ENCODE measurements at regions of chr3 and their contacts with region 1.

Region 1: GRCh38 chr3:31768479-31769123 is 212.5 kb downstream of the OSBPL10 start:
- DNase-seq: peak; percentile 84
- H3K4me3 Mint-ChIP-seq: no peak overlapping the region
- H3K27ac Mint-ChIP-seq: no peak overlapping the region
- H3K4me1 Mint-ChIP-seq: peaks cover 32% of the 10 kb centered on the region
- H3K27me3 Mint-ChIP-seq: no peaks in the 10 kb centered on the region

Region 2: DNA sequence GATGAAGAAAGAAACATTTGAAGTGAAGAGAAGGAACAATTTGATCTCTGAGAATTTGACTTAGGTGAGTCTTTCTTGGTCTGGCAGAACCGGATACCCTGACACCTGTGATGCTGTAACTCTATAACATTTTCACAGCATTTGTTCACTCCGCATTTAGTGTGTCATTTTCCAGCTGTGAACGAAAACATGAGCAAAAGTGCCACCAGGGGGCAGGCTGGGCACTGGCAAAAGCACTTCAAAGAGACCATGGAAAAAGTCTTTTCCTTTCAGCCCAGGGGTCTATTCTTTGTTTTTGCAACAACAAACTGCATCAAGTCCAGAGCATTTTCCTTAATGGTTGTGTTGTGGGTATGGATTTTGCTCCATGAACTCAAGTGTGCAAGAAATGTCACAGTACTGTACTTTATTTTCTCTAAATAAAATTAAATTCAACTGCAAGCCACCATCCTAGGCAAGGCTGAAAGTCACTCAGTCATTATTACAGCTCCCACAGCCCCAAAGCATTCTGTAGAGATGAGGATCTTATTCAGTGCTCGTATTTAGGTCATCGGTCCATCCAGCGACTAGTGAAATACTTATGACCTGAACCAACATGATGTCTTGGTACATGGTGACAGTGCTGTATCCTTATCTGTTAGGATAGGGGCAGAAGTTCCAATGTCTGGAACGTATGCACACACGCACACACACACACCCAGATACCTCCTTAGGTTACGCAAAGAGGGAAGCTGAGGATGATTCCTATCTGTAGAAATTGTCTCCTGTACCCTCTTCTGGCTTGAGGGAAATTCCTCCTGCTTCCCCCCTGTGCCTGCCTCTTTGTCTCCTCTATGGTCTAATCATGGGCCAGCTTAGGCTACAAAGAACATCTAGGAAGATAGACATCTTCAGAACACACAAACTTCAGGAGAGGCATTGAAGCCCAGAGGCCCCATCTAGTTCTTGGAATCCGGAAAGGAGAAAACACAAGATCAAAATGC is 999.6 kb before region 1 on chr3:
- CTCF ChIA-PET with region 1: no interaction called
- intact Hi-C with region 1: loop called (anchors 2 kb)
- DNase-seq: peak; percentile 87
- H3K4me3 Mint-ChIP-seq: no peak overlapping the region
- H3K27ac Mint-ChIP-seq: no peak overlapping the region
- H3K4me1 Mint-ChIP-seq: no peaks in the 10 kb centered on the region
- H3K27me3 Mint-ChIP-seq: no peaks in the 10 kb centered on the region

Region 3: GRCh38 chr3:31253782-31254181 is 514.8 kb before region 1 on chr3:
- CTCF ChIA-PET with region 1: no interaction called
- intact Hi-C with region 1: loop called (anchors 1 kb)
- DNase-seq: peak; percentile 59
- H3K4me3 Mint-ChIP-seq: no peak overlapping the region
- H3K27ac Mint-ChIP-seq: peak overlapping the region; percentile 65
- H3K4me1 Mint-ChIP-seq: peaks cover 51% of the 10 kb centered on the region
- H3K27me3 Mint-ChIP-seq: no peaks in the 10 kb centered on the region

Region 4: GRCh38 chr3:31567036-31567435 is 201.6 kb before region 1 on chr3:
- CTCF ChIA-PET with region 1: no interaction called
- intact Hi-C with region 1: loop called (anchors 5 kb)
- DNase-seq: peak; percentile 54
- H3K4me3 Mint-ChIP-seq: no peak overlapping the region
- H3K27ac Mint-ChIP-seq: no peak overlapping the region
- H3K4me1 Mint-ChIP-seq: peaks cover 82% of the 10 kb centered on the region
- H3K27me3 Mint-ChIP-seq: no peaks in the 10 kb centered on the region

Region 5: DNA sequence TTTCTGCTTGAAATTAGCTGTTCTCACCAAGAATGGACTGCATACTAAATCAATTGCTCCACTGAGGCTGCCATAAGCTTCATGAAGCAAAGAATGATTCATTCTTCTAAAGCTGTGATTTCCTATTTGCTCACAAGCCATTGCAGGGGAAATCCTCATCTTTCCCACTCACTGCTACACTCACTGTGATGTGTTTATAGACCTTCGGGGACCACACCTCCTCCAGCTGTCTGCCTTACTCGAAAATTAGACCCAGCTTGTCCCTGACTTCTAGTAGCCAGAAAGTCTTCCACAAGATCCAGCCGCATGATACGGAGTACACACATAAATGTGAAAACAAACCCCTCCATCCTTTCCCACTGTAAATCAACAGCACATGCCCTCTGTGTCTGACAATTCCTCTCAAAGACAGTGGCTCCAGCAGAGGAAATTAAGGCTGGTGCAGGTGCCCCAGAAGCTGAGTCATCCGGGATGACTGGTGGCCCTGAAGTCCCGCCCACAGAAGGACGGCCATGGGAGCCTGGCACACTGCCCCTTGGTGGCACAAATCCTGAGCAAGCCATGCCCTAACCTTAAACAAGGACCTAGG is 63.9 kb before region 1 on chr3:
- CTCF ChIA-PET with region 1: no interaction called
- intact Hi-C with region 1: loop called (anchors 2 kb)
- DNase-seq: peak; percentile 74
- H3K4me3 Mint-ChIP-seq: peak overlapping the region; percentile 55
- H3K27ac Mint-ChIP-seq: peak overlapping the region; percentile 85
- H3K4me1 Mint-ChIP-seq: peaks cover 13% of the 10 kb centered on the region
- H3K27me3 Mint-ChIP-seq: peaks cover 7% of the 10 kb centered on the region

Region 6: DNA sequence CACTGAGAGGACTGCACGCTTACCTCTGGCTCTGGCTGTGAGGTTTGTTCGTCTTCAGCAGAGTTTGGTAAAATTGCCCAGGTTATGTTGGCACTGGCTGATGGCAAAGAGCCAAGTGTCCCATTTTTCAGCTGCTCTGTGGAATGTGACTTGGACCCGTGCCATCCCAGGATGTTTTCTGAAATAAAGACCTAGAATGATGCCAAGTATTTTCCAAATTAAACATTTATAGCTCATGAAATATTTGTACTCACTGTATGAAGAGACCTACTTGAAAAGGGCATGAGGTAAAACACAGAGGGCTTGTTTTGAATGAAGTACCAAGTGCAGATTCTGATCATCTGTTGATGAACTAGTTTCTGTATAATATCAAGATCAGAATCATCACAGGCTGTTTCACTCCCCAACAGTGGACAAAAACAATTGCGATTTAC is 35.4 kb before region 1 on chr3:
- CTCF ChIA-PET with region 1: no interaction called
- intact Hi-C with region 1: no loop called
- DNase-seq: no peak
- H3K4me3 Mint-ChIP-seq: no peak overlapping the region
- H3K27ac Mint-ChIP-seq: no peak overlapping the region
- H3K4me1 Mint-ChIP-seq: no peaks in the 10 kb centered on the region
- H3K27me3 Mint-ChIP-seq: peaks cover 5% of the 10 kb centered on the region

Region 7: GRCh38 chr3:31754575-31755278 is 13.9 kb before region 1 on chr3:
- CTCF ChIA-PET with region 1: interaction called, 3 read pairs
- intact Hi-C with region 1: loop called (anchors 1 kb)
- DNase-seq: no peak
- H3K4me3 Mint-ChIP-seq: no peak overlapping the region
- H3K27ac Mint-ChIP-seq: peak overlapping the region; percentile 94
- H3K4me1 Mint-ChIP-seq: peaks cover 41% of the 10 kb centered on the region
- H3K27me3 Mint-ChIP-seq: peaks cover 2% of the 10 kb centered on the region

Region 8: GRCh38 chr3:31785286-31785685 is 16.7 kb after region 1 on chr3:
- CTCF ChIA-PET with region 1: no interaction called
- intact Hi-C with region 1: no loop called
- DNase-seq: no peak
- H3K4me3 Mint-ChIP-seq: no peak overlapping the region
- H3K27ac Mint-ChIP-seq: no peak overlapping the region
- H3K4me1 Mint-ChIP-seq: no peaks in the 10 kb centered on the region
- H3K27me3 Mint-ChIP-seq: peaks cover 5% of the 10 kb centered on the region

Region 9: DNA sequence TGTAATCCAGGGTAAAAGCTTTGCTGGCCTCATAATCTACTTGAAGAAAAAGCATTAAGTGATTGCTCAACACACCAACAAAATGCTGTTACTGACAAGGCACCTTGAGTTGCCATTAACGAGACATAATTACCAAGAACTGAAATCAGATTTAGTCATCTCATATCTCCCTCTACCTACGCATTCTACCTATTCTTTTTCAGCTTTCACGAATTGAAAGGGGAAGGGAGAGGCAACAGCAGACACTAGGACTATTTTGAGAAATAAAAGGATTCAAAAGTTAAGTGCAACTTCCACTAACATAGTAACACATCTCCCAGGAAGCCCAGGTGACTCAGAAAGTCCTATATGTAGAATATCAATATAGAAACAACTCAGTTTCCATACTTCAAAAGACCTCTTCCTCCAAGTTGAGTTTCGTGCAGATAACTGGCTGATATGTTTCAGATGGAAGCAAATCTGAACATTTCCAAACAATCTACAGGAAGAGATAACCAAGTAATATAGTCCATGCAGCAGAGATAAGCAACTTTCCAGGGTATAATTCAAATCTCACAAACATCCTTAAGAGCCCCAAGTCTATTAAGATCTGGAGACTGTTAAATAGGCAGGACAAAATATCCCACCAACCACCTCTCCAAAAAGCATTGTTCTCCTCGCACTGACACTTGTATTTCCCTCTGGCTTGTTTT is 210.6 kb after region 1 on chr3:
- CTCF ChIA-PET with region 1: no interaction called
- intact Hi-C with region 1: loop called (anchors 1 kb)
- DNase-seq: peak; percentile 37
- H3K4me3 Mint-ChIP-seq: peak overlapping the region; percentile 78
- H3K27ac Mint-ChIP-seq: peak overlapping the region; percentile 43
- H3K4me1 Mint-ChIP-seq: peaks cover 26% of the 10 kb centered on the region
- H3K27me3 Mint-ChIP-seq: peaks cover 49% of the 10 kb centered on the region

Measured in activated naive CD4-positive, alpha-beta T cell treated with anti-CD3 and anti-CD28 coated beads for 36 hours (primary cell).